Dendritic cell treated with granulocyte-macrophage colony-stimulating factor and Interleukin-4, amounts not matched to agents 40 ng/mL and 50 ng/mL, for 4 days (primary cell): ENCODE measurements at regions of chr13 and their contacts with region 1.

Region 1: GRCh38 chr13:42048682-42049453 is 420 bp downstream of the DGKH start:
- H3K4me3 Mint-ChIP-seq: peak overlapping the region; percentile 90
- H3K27ac Mint-ChIP-seq: peak overlapping the region; percentile 83
- H3K4me1 Mint-ChIP-seq: peaks cover 18% of the 10 kb centered on the region
- H3K27me3 Mint-ChIP-seq: peaks cover 32% of the 10 kb centered on the region

Region 2: GRCh38 chr13:41554626-41555386 is 494.1 kb before region 1 on chr13:
- intact Hi-C with region 1: no loop called
- H3K4me3 Mint-ChIP-seq: no peak overlapping the region
- H3K27ac Mint-ChIP-seq: no peak overlapping the region
- H3K4me1 Mint-ChIP-seq: no peaks in the 10 kb centered on the region
- H3K27me3 Mint-ChIP-seq: no peaks in the 10 kb centered on the region

Region 3: DNA sequence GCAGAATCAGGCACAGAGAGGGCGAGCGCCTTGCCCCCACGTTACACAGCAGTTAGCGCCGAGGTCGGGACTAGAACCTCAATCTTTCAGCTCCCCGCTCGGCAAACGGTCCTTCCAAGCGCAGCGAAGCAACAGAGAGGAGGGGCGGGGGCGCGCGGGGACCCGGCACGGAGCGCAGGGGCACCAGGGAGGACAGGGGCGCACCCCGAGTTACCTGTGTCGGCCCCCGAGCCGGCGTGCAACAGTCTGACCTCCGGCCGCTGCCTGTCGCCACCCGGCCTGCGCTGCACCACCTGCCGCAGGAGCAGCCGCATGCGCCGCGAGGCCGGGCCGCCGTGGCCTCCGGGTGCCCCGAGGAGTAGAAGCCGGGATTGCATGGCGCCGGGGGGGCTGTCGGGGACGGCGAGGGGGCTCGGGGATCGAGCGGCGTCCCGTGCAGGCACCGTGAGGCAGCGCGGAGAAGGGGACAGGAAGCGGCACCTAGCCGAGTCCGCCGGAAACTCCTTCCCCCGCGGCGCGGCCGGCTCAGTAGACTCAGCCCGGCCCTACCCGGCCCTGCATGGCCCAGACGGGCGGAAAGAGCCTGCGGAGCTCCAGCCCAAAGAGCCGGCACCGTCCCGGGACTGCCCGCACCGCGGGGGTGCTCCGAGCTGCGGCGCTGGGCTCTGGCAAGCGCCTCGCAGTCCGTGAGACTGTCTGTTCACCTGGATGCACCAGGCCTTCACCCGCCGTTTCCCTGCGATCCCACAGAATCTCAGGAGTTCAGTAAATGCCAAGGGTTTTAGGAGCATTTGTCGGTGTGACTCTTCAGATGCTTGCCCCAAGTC is 88.0 kb before region 1 on chr13 and contains the start of gene VWA8:
- intact Hi-C with region 1: loop called (anchors 5 kb)
- H3K4me3 Mint-ChIP-seq: peak within 1 kb of the TSS; percentile 83
- H3K27ac Mint-ChIP-seq: peak within 1 kb of the TSS; percentile 79
- H3K4me1 Mint-ChIP-seq: peaks cover 15% of the 10 kb centered on the region
- H3K27me3 Mint-ChIP-seq: peaks cover 16% of the 10 kb centered on the region

Region 4: GRCh38 chr13:42064259-42064658 is 15.4 kb after region 1 on chr13:
- intact Hi-C with region 1: no loop called
- H3K4me3 Mint-ChIP-seq: no peak overlapping the region
- H3K27ac Mint-ChIP-seq: no peak overlapping the region
- H3K4me1 Mint-ChIP-seq: peaks cover 14% of the 10 kb centered on the region
- H3K27me3 Mint-ChIP-seq: no peaks in the 10 kb centered on the region